ENCODE measurements at regions of chr20 and their contacts with region 1.

Region 1: DNA sequence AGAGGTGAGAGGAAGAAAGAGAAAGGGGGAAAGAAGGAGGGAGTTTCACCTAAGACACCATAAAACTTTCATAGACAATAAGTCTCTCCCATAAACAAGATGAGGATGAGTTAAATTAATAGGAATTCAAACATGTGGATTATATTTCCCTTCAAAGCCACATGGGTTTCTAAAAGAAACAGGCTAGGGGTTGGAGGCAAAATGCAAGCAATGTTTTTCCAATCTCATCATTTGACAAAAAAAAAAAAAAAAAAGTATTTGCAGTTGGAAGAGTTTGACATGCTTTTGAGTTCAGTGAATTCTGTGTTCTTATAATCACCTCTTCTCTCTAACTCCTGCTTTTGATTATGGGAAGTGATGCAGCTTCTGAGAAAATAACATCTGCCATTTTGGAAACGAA is 286.5 kb upstream of the PRND start:
- DNase-seq: no peak
- H3K4me3 ChIP-seq: no peak overlapping the region
- H3K27ac ChIP-seq: no peak overlapping the region
- H3K4me1 ChIP-seq: no peaks in the 10 kb centered on the region
- CTCF ChIP-seq: no peak

Region 2: GRCh38 chr20:4384961-4385360 is 50.3 kb before region 1 on chr20:
- CTCF ChIA-PET with region 1: no interaction called
- POLR2A ChIA-PET with region 1: interaction called, 10 read pairs
- intact Hi-C with region 1: no loop called
- DNase-seq: no peak
- H3K4me3 ChIP-seq: no peak overlapping the region
- H3K27ac ChIP-seq: no peak overlapping the region
- H3K4me1 ChIP-seq: no peaks in the 10 kb centered on the region
- CTCF ChIP-seq: no peak